ENCODE measurements at regions of chr15 and their contacts with region 1.

Region 1: DNA sequence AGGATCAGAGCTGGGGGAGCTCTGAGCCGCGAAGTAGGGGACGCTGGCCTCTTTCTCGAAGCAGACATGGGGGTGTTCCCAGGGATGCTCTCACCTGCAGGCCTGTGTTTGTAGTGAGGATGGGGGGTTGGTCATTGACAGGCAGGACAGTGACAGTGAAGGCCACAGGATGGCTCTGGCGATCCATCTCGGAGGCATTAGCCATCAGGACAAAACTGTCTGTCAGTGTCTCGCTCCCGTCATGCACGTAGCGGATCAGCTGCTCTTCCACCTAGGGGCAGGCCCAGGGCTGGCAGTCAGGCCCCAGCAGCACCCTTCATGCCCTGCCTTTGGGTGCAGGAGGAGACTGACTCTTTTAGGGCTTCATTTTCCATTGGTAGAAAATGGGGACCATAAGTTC is 28.0 kb downstream of the CSPG4 start:
- DNase-seq: peak in 3 of 4 experiments; percentile 11 to 54 (median 17)
- ATAC-seq: peak; percentile 8; the same call in 2 of the 3 replicates
- H3K4me3 ChIP-seq: no peak overlapping the region
- H3K27ac ChIP-seq: no peak overlapping the region
- H3K4me1 ChIP-seq: peaks cover 0 to 34% of the 10 kb centered on the region in 2 experiments; a peak in 3 of 5 replicates
- H3K27me3 ChIP-seq: no peaks in the 10 kb centered on the region
- CTCF ChIP-seq: peak; percentile 39 to 45 (median 44); a peak in 5 of 6 replicates
- EP300 ChIP-seq: no peak
- POLR2A ChIP-seq: no peak
- RAD21 ChIP-seq: peak in 1 of 2 experiments; percentile 47; a peak in 2 of 4 replicates

Region 2: GRCh38 chr15:74956648-74957300 is 727.9 kb before region 1 on chr15 and contains the start of gene RPP25:
- CTCF ChIA-PET with region 1: no interaction called
- POLR2A ChIA-PET with region 1: no interaction called
- in situ Hi-C with region 1: no loop called
- intact Hi-C with region 1: no loop called
- DNase-seq: peak; percentile 85 to 90 (median 88)
- ATAC-seq: peak; percentile 91
- H3K4me3 ChIP-seq: peak within 1 kb of the TSS; percentile 52
- H3K27ac ChIP-seq: peak within 1 kb of the TSS; percentile 68
- H3K4me1 ChIP-seq: peaks cover 36 to 63% of the 10 kb centered on the region in 2 experiments
- H3K27me3 ChIP-seq: peaks cover 23 to 32% of the 10 kb centered on the region in 2 experiments
- CTCF ChIP-seq: no peak
- EP300 ChIP-seq: no peak
- POLR2A ChIP-seq: peak; percentile 70; the same call in 1 of the 2 replicates
- RAD21 ChIP-seq: no peak
- polyA plus RNA-seq, gene RPP25: 1.1 to 1.3 TPM

Region 3: DNA sequence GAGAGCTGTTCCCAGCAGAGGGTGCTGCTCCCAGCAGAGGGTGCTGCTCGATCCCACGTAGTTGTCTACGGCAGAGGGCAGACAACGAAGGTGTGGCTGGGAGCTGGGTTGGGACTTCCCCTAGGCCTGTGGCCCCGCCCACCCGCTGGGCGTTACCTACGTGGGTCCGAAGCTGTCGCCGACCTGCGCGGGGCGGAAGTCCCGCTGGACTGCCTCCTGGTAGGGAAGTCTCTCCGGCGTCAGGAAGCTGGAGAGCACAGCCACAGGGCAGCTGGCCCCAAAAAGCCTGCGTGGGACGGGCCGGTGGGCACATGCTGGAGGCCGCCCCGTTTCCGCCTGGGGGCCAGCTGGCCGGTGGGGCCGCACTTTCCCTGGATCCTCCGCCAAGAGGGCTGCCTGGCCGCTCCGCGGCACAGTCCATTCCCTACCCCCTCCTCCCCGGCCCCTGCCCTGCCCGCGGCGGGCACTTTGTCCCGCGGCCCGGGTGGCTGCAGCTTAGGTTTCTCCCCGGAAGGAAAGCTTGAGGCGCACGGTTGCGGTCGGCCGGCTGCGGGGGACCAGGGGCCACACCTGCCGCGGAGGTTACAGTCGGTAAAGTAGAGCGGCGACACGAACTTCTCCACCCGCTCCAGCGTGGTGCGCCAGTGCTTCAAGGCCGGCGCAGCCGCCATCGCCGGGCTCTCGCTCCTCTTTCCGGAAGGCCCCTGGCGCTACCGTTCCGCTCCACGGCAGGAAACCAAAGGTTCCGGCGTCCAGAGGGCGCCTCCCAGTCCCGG is 316.5 kb before region 1 on chr15 and contains the start of gene MAN2C1:
- CTCF ChIA-PET with region 1: interaction called, 4 read pairs
- POLR2A ChIA-PET with region 1: no interaction called
- in situ Hi-C with region 1: loop called (anchors 5 kb)
- intact Hi-C with region 1: loop called (anchors 2 kb)
- DNase-seq: peak; percentile 96 to 99 (median 96)
- ATAC-seq: peak; percentile 97
- H3K4me3 ChIP-seq: peak within 1 kb of the TSS; percentile 96
- H3K27ac ChIP-seq: peak within 1 kb of the TSS; percentile 96
- H3K4me1 ChIP-seq: peaks cover 12 to 14% of the 10 kb centered on the region in 2 experiments; a peak in 4 of 5 replicates
- H3K27me3 ChIP-seq: no peaks in the 10 kb centered on the region
- CTCF ChIP-seq: peak; percentile 91 to 98 (median 96)
- EP300 ChIP-seq: peak; percentile 21
- POLR2A ChIP-seq: peak; percentile 98
- RAD21 ChIP-seq: peak; percentile 62 to 84
- polyA plus RNA-seq, gene MAN2C1: 2.0 TPM

Region 4: DNA sequence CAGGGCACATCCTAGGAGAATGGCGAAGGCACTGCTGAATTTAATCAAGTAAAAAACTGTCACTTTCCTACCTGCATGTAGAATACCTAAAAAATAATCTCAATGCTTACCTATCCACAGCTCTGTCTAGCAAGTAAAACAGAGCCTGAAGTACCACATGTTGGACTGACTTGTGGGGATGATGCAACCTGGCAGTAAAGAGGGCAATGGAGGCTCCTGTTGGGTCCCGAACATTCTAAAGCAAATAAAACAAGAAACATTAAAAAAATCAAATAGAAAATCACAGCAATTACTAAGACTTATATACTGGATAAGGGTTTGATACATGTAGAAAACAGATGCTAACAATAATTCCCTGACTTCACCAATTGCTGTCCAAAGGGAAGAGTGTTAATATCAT is 161.6 kb before region 1 on chr15:
- CTCF ChIA-PET with region 1: no interaction called
- POLR2A ChIA-PET with region 1: no interaction called
- in situ Hi-C with region 1: no loop called
- intact Hi-C with region 1: no loop called
- DNase-seq: no peak
- ATAC-seq: peak; percentile 59
- H3K4me3 ChIP-seq: no peak overlapping the region
- H3K27ac ChIP-seq: no peak overlapping the region
- H3K4me1 ChIP-seq: no peaks in the 10 kb centered on the region
- H3K27me3 ChIP-seq: no peaks in the 10 kb centered on the region
- CTCF ChIP-seq: no peak
- EP300 ChIP-seq: no peak
- POLR2A ChIP-seq: no peak
- RAD21 ChIP-seq: no peak

Region 5: DNA sequence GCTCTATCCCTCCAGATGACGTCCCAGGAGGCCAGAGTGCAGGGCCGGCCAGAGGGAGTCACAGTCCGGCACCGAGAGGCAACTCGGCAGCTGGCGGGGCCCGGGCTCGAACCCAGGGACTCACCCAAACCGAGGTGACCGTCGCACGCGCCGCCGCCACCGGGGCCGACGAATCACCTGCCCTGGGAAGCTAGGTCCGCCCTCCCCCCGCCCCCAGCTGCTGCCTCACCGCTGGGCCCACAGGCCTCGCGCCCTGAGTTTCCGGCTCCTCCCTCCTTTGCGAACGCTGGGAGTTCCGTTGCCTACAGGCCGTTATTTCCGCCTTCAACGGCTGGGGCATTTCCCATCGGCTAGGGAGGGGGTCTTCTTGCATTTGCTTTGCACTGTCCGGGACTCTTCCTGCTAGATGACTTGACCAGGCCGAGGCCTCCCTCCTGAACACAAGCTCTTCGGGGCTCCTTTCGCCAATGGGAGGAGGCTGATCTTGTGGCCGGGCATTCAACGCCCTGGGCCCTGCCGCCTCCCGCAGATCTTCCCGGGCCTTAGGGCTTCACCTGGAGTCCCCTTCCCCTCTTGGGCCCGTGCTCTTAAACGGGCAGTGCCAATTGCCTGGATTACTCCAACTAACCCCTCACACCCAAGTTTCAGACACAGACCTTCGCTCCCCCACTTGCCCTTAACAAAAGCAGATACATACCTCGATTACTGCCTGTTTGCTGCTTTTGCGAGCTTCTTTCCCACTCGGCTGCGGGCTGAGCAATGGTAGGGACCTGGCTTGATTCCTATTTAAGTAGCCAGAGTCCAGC is 58.9 kb before region 1 on chr15 and contains the start of gene SNUPN:
- CTCF ChIA-PET with region 1: no interaction called
- POLR2A ChIA-PET with region 1: no interaction called
- in situ Hi-C with region 1: no loop called
- intact Hi-C with region 1: loop called (anchors 5 kb)
- DNase-seq: peak; percentile 95 to 99 (median 96)
- ATAC-seq: peak; percentile 91
- H3K4me3 ChIP-seq: peak within 1 kb of the TSS; percentile 99
- H3K27ac ChIP-seq: peak within 1 kb of the TSS; percentile 91
- H3K4me1 ChIP-seq: peaks cover 20 to 23% of the 10 kb centered on the region in 2 experiments
- H3K27me3 ChIP-seq: no peaks in the 10 kb centered on the region
- CTCF ChIP-seq: no peak
- EP300 ChIP-seq: peak; percentile 77; the same call in 1 of the 2 replicates
- POLR2A ChIP-seq: peak; percentile 92
- RAD21 ChIP-seq: no peak
- polyA plus RNA-seq, gene SNUPN: 69.3 to 78.3 TPM

Region 6: GRCh38 chr15:75732809-75733451 is 48.3 kb after region 1 on chr15:
- CTCF ChIA-PET with region 1: no interaction called
- POLR2A ChIA-PET with region 1: no interaction called
- in situ Hi-C with region 1: loop called (anchors 5 kb)
- intact Hi-C with region 1: no loop called
- DNase-seq: peak; percentile 69 to 79 (median 70)
- ATAC-seq: peak; percentile 91
- H3K4me3 ChIP-seq: no peak overlapping the region
- H3K27ac ChIP-seq: no peak overlapping the region
- H3K4me1 ChIP-seq: peaks cover 3 to 30% of the 10 kb centered on the region in 2 experiments
- H3K27me3 ChIP-seq: 0 out of 5 replicates have a peak, but pooled peaks cover 0 to 5% of the 10 kb centered on the region in 2 experiments
- CTCF ChIP-seq: peak; percentile 79 to 90 (median 82)
- EP300 ChIP-seq: no peak
- POLR2A ChIP-seq: no peak
- RAD21 ChIP-seq: peak; percentile 42 to 70

Region 7: DNA sequence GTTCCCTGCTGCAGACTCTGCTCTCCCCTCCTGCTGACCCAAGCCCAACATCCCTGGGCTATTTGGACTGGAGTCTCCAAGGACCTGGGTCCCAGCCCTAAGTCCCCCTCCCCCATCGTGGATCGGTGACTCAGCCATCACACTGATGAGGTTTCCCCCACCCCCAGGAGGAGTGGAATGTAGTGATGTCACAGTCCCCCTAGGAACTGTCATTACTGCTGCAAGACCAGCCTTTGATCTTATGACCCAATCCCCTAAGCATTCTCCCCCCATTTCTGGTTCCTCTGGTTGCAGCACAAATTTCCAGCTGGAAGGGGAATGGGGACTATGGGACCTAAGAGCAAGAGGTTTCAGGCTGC is 91.4 kb after region 1 on chr15:
- CTCF ChIA-PET with region 1: no interaction called
- POLR2A ChIA-PET with region 1: no interaction called
- in situ Hi-C with region 1: no loop called
- intact Hi-C with region 1: no loop called
- DNase-seq: peak; percentile 21 to 52 (median 36)
- ATAC-seq: no peak
- H3K4me3 ChIP-seq: no peak overlapping the region
- H3K27ac ChIP-seq: no peak overlapping the region
- H3K4me1 ChIP-seq: peaks cover 7 to 15% of the 10 kb centered on the region in 2 experiments
- H3K27me3 ChIP-seq: peaks cover 6 to 19% of the 10 kb centered on the region in 2 experiments; a peak in 3 of 5 replicates
- CTCF ChIP-seq: no peak
- EP300 ChIP-seq: no peak
- POLR2A ChIP-seq: no peak
- RAD21 ChIP-seq: no peak

Region 8: DNA sequence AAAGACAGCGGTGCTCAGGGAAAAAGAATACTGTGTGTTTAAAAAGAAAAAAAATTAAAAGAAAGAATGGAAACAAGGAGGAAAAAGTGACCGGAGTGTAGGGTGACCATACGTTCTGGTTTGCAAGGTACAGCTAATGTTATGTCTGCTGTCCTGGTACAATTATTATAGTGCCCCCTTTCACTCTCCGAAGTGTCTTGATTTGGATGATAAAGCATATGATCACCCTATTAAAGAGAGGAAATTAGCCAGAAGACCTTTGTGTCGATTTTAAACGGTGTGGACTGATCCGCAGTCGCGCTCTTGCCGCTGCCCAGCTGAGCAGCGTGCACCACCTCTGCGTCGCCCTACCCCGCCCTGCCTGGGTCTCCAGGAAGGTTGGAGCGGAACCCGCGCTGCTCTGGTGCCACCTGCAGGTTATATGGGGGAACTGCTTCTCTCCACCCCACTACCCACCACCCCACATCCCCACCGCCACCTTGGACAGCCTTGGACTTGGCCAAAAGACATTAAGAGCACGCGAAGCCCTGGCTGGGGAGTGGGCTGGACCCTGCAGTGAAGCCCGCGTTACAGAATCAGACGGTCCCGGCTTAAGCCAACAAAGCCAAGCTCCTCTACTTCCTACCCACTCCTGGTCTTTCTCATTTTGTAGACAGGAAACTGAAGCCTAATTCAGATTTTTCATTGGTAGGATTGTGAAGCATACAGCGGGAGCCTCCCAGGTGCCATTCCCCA is 117.4 kb after region 1 on chr15:
- CTCF ChIA-PET with region 1: interaction called, 5 read pairs
- POLR2A ChIA-PET with region 1: no interaction called
- in situ Hi-C with region 1: no loop called
- intact Hi-C with region 1: loop called (anchors 2 kb)
- DNase-seq: peak; percentile 87 to 92 (median 90)
- ATAC-seq: peak; percentile 100
- H3K4me3 ChIP-seq: 0 out of 2 replicates have a peak overlapping the region, but pooled peaks have one; percentile 9
- H3K27ac ChIP-seq: no peak overlapping the region
- H3K4me1 ChIP-seq: peaks cover 7 to 11% of the 10 kb centered on the region in 2 experiments; a peak in 4 of 5 replicates
- H3K27me3 ChIP-seq: peaks cover under 1 to 4% of the 10 kb centered on the region in 2 experiments; a peak in 1 of 5 replicates
- CTCF ChIP-seq: peak; percentile 75 to 91 (median 89)
- EP300 ChIP-seq: no peak
- POLR2A ChIP-seq: no peak
- RAD21 ChIP-seq: peak; percentile 87 to 89

Region 9: GRCh38 chr15:75928680-75929608 is 244.3 kb after region 1 on chr15:
- CTCF ChIA-PET with region 1: no interaction called
- POLR2A ChIA-PET with region 1: no interaction called
- in situ Hi-C with region 1: loop called (anchors 5 kb)
- intact Hi-C with region 1: loop called (anchors 10 kb)
- DNase-seq: peak; percentile 28 to 70 (median 38)
- ATAC-seq: peak; percentile 95
- H3K4me3 ChIP-seq: no peak overlapping the region
- H3K27ac ChIP-seq: no peak overlapping the region
- H3K4me1 ChIP-seq: peaks cover 0 to 15% of the 10 kb centered on the region in 2 experiments; a peak in 2 of 5 replicates
- H3K27me3 ChIP-seq: no peaks in the 10 kb centered on the region
- CTCF ChIP-seq: peak; percentile 70 to 75 (median 73)
- EP300 ChIP-seq: no peak
- POLR2A ChIP-seq: no peak
- RAD21 ChIP-seq: peak; percentile 41 to 65

Measured in K562 (cell line).